Dendritic cell treated with granulocyte-macrophage colony-stimulating factor and Interleukin-4, amounts not matched to agents 40 ng/mL and 50 ng/mL, for 4 days (primary cell): ENCODE measurements at regions of chr18 and their contacts with region 1.

Region 1: DNA sequence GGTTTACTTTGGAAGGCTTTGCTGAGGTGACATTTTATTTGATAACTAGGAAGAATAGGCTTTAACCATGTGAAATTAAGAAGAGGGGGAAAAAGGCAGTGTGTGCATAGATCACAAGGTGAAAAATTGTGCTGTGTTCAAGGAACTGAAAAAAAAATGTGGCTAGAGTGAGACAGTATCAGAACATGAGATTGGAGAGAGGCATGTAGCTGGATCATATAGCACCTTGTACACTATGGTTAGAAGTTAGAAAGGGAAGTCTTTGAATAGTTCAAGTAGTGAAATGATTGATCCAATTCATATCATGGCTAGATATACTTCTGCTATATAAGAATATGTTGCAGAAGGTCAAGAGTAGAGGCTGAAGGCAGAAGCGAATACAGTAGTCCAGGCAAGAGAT is 12.3 kb upstream of the TNFRSF11A start:
- H3K4me3 Mint-ChIP-seq: no peak overlapping the region
- H3K27ac Mint-ChIP-seq: no peak overlapping the region
- H3K4me1 Mint-ChIP-seq: no peaks in the 10 kb centered on the region
- H3K27me3 Mint-ChIP-seq: peaks cover 14% of the 10 kb centered on the region

Region 2: DNA sequence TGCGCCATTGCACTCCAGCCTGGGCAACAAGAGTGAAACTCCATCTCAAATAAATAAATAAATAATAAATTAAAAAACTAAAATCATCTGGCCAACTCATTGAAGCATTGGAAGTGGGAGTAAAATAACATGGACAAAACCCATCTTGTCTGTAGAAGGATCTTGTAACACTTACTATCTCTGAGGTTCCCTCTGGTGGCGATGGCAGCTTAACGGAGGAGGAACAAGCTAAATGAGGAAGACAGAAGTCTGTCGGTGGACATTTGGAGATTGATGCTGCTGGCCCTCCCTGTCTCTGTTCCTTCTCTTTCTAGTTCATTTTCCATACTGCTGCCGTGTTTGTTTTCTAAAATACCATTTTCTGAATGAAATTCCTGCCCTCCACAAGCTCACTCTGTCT is 253.3 kb after region 1 on chr18:
- intact Hi-C with region 1: loop called (anchors 10 kb)
- H3K4me3 Mint-ChIP-seq: no peak overlapping the region
- H3K27ac Mint-ChIP-seq: no peak overlapping the region
- H3K4me1 Mint-ChIP-seq: peaks cover 6% of the 10 kb centered on the region
- H3K27me3 Mint-ChIP-seq: no peaks in the 10 kb centered on the region